Activated CD8-positive, alpha-beta T cell treated with anti-CD3 and anti-CD28 coated beads, Interleukin-2, amount 10 ng/mL, durations not matched to agents 7 days and 5 days (primary cell): ENCODE measurements at regions of chr14 and their contacts with region 1.

Region 1: DNA sequence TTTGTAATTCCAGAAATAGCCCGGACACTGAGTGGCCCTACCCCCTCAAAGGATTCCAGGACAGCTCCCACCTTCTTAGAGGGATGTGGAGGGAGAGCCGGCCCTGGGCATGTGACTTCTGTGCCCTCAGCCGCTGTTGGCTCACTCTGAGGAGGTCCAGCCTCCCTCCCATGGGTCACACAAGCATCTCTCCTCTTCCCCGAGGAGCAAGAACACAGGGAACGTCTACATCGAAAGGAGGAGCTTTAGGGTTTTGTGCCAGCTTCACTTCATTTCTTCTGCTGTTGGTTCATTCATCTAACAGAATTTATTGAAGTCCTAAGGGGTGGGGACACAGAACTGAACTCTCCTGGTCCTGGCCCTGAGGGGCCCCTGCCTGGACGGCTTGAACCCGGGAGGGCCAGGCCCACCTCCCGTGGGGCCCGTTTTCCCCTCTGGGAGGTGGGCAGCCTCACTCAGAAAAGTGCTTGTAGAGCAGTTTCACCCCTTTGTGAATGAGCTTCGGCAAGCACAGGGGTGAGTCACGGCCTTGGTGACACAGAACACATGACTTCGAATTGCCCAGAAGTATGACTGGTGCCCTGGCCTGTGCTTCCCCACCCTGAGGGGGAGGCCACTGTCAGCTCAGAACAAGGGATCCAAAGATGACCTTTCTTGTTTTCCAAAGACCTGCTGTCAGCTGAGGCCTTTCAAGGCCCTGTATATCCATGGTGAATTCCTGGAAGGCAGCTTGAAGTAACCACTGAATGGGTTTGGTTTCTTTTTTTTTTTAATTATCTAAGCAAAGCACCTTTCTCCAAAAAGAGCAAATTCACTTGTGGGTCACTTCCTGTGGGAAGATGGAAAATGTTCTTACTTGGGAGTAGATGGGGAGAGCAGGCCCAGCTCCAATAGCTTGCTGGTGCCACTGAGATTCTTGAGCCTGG is 39.2 kb downstream of the NFKBIA start:
- DNase-seq: peak; percentile 59
- ATAC-seq: peak; percentile 67
- H3K4me3 Mint-ChIP-seq: no peak overlapping the region
- H3K27ac Mint-ChIP-seq: peak overlapping the region; percentile 52
- H3K4me1 Mint-ChIP-seq: peaks cover 44% of the 10 kb centered on the region
- H3K27me3 Mint-ChIP-seq: no peaks in the 10 kb centered on the region

Region 2: GRCh38 chr14:35292051-35292769 is 73.2 kb before region 1 on chr14 and contains the start of gene PSMA6:
- CTCF ChIA-PET with region 1: interaction called, 12 read pairs
- POLR2A ChIA-PET with region 1: interaction called, 14 read pairs
- DNase-seq: peak; percentile 100
- ATAC-seq: peak; percentile 94
- H3K4me3 Mint-ChIP-seq: peak within 1 kb of the TSS; percentile 99
- H3K27ac Mint-ChIP-seq: peak within 1 kb of the TSS; percentile 98
- H3K4me1 Mint-ChIP-seq: peaks cover 41% of the 10 kb centered on the region
- H3K27me3 Mint-ChIP-seq: no peaks in the 10 kb centered on the region
- total RNA-seq, gene PSMA6: 266 to 269 TPM

Region 3: DNA sequence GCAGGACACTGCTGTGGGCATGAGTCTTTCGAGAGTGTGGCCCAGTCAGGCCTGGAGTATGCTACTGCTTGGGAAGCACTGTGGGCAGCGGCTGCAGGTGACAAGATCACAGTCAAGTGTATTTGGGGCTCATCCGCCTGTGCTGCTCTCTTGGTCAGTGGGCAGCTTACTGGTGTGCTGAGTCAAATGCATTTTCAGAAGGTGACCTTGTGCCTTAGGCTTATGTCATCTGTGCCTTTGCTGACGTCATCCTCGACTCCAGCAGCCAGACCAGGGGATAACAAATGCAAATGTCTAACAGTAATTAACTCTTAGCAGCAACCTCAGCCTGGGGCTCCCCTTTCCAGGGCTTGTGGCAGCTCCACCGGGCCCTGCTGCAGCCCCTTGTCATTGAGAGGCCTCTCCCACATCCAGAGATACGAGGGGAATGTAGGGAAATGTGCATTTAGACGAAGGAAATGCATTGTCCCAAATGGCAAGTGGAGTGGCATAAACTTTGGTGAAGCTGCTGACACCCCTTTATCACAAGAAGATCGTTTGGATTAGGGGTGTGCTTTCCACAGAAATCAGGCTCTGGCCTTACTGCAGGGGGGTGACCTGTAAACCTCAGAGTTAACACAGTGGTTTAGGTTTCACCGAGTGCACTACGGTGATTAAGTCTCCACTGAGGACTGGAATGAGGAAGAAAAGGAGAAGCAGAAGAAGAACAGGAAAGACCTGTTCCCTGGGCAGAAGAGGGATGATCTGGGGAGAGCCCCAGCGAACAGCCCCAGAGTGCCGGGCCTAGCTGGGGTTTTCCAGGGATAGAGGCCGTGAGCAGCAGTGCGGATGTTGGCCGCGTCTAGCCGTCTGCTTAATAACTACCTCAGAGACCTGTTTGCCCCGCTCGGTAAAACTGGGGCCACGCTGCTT is 33.5 kb before region 1 on chr14:
- CTCF ChIA-PET with region 1: interaction called, 24 read pairs
- POLR2A ChIA-PET with region 1: interaction called, 9 read pairs
- DNase-seq: no peak
- ATAC-seq: no peak
- H3K4me3 Mint-ChIP-seq: no peak overlapping the region
- H3K27ac Mint-ChIP-seq: peak overlapping the region; percentile 89
- H3K4me1 Mint-ChIP-seq: peaks cover 35% of the 10 kb centered on the region
- H3K27me3 Mint-ChIP-seq: no peaks in the 10 kb centered on the region